Aorta (tissue), 5 donors: ENCODE measurements at regions of chr11 and their contacts with region 1.

Region 1: DNA sequence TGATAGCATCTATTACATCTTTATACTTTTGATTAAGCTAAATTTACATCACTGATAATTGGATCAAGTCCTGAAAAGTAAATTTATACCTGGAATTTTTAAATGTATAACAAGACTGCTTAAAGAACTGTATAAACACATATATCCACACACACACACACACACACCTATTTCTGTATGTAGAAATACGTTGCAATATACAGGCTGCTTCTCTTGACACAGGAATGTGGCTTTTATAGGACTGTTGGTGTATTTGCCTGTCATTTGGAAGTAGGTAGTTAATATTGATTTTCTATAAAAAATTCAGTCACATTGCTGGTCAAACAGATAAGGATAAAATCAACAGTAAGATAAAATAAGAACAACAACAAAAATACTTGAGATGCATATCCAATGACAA is 708.5 kb upstream of the RAG2 start:
- DNase-seq: no peak
- ATAC-seq: no peak
- H3K4me3 ChIP-seq: no peak overlapping the region
- H3K27ac ChIP-seq: no peak overlapping the region
- H3K4me1 ChIP-seq: no peaks in the 10 kb centered on the region
- H3K27me3 ChIP-seq: no peaks in the 10 kb centered on the region

Region 2: GRCh38 chr11:37203006-37203405 is 103.6 kb before region 1 on chr11:
- intact Hi-C with region 1: no loop called
- DNase-seq: no peak
- ATAC-seq: no peak
- H3K4me3 ChIP-seq: no peak overlapping the region
- H3K27ac ChIP-seq: no peak overlapping the region
- H3K4me1 ChIP-seq: no peaks in the 10 kb centered on the region
- H3K27me3 ChIP-seq: no peaks in the 10 kb centered on the region

Region 3: GRCh38 chr11:37264783-37265182 is 41.8 kb before region 1 on chr11:
- intact Hi-C with region 1: no loop called
- DNase-seq: no peak
- ATAC-seq: no peak
- H3K4me3 ChIP-seq: no peak overlapping the region
- H3K27ac ChIP-seq: no peak overlapping the region
- H3K4me1 ChIP-seq: no peaks in the 10 kb centered on the region
- H3K27me3 ChIP-seq: no peaks in the 10 kb centered on the region

Region 4: DNA sequence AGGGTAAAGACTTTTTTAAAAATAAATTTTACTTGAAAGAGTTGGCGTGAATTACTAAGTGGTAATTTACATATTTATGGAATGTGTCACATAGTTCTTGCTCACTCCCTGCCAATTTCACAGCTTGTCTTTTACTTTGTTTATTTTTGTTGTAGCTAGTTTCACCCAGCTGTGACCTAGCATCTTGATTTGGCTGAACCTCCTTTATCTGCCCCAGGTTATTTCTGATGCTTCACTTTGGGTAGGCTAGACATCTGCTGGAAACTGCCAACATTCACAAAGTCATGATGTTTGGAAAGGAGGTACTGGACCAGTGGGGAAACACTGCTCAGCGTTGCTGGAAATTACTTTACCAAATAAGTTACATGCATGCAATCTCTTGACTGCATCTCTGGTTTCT is 967.5 kb after region 1 on chr11:
- intact Hi-C with region 1: loop called in 1 of 2 experiments (anchors 10 kb)
- DNase-seq: no peak
- ATAC-seq: no peak
- H3K4me3 ChIP-seq: no peak overlapping the region
- H3K27ac ChIP-seq: no peak overlapping the region
- H3K4me1 ChIP-seq: no peaks in the 10 kb centered on the region
- H3K27me3 ChIP-seq: no peaks in the 10 kb centered on the region